Ovary (tissue), 10 donors: ENCODE measurements at regions of chr18 and their contacts with region 1.

Region 1: DNA sequence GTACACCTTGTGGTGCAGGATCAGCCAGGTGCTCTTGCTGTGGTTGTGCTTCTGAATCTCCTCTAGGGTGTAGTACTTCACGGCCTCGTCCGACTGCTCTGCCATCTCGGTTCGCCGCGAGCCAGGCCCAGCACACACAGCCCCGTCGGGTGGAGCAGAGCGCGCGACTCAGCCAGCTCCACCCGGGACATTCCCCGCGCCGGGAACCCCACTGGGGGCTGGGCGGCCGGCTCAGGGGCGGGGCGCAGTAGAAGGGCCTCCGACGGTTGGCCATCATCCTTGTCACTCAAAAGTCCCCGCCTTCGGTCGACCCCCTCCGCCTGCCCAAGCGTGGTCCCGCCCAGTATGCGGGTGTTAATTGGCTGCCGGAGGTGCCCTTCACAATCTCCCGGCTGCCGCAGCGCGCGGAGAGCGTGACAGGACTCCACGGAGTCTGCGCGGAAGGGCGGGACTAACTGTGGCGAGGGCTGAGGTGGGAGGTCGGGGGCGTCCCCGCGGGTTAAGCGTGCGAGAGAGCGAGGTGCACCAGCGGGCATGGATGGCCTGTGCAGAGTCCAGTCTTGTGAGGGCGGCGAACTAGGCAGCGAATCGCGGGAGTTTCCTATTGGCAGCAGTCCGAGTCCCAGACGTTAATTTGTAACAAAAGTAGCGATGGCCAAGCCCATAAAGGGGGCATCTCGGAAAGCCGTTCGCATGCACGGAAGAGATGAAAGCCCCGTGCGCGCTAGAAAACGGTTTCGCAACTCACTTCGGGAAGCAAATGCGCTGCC is at the start of gene CYB5A:
- DNase-seq: peak; percentile 98 to 100 (median 99)
- H3K4me3 ChIP-seq: peak within 1 kb of the TSS; percentile 91
- H3K27ac ChIP-seq: peak within 1 kb of the TSS; percentile 48 to 64
- H3K4me1 ChIP-seq: peaks cover 7% of the 10 kb centered on the region
- H3K27me3 ChIP-seq: no peaks in the 10 kb centered on the region
- CTCF ChIP-seq: no peak
- EP300 ChIP-seq: no peak
- POLR2A ChIP-seq: peak; percentile 46
- total RNA-seq, gene CYB5A: 158 to 454 (median 293) TPM

Region 2: GRCh38 chr18:74147779-74148542 is 144.0 kb before region 1 on chr18 and contains the starts of genes FBXO15 and TIMM21:
- intact Hi-C with region 1: loop called in 1 of 4 experiments (anchors 5 kb)
- DNase-seq: peak; percentile 95 to 98 (median 97)
- H3K4me3 ChIP-seq: peak within 1 kb of the TSS; percentile 77
- H3K27ac ChIP-seq: peak within 1 kb of the TSS; percentile 78 to 91
- H3K4me1 ChIP-seq: peaks cover 7% of the 10 kb centered on the region
- H3K27me3 ChIP-seq: no peaks in the 10 kb centered on the region
- CTCF ChIP-seq: no peak
- EP300 ChIP-seq: no peak
- POLR2A ChIP-seq: peak; percentile 64
- total RNA-seq, gene FBXO15: 0.40 to 13.6 (median 1.3) TPM
- total RNA-seq, gene TIMM21: 12.5 to 28.0 (median 22.9) TPM

Region 3: DNA sequence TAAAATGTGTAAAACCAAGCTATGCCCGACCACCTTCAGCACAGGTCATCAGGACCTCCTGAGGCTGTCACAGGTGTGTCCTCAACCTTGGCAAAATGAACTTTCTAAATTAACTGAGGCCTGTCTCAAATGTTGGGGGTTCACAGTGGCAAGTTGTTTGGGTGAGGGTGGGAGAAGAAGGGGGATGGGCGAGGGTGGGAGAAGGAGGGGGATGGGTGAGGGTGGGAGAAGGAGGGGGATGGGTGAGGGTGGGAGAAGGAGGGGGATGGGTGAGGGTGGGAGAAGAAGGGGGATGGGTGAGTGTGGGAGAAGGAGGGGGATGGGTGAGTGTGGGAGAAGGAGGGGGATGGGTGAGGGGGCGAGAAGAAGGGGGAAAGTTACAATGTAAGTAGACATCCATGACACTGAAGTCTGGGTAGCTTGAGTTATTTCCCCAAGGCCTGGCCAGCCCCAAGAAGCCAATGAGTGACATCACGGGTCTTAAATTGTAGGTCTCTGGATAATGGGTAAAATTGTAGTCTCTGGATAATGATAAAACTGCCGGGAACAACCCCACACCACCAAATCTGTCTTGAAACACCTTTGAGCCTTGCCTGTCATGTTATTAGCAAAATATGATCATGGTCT is 87.3 kb before region 1 on chr18:
- intact Hi-C with region 1: loop called in 1 of 4 experiments (anchors 10 kb)
- DNase-seq: peak in 2 of 5 donors; percentile 59 to 68
- H3K4me3 ChIP-seq: no peak overlapping the region
- H3K27ac ChIP-seq: peak overlapping the region in 1 of 2 donors; percentile 55
- H3K4me1 ChIP-seq: peaks cover 10% of the 10 kb centered on the region
- H3K27me3 ChIP-seq: no peaks in the 10 kb centered on the region
- CTCF ChIP-seq: no peak
- EP300 ChIP-seq: no peak
- POLR2A ChIP-seq: no peak